ENCODE measurements at regions of chr1 and their contacts with region 1.

Region 1: GRCh38 chr1:112619520-112620376 is at the start of gene CAPZA1:
- DNase-seq: peak; percentile 95
- ATAC-seq: peak; percentile 98
- H3K4me3 ChIP-seq: peak within 1 kb of the TSS; percentile 97
- H3K27ac ChIP-seq: peak within 1 kb of the TSS; percentile 99
- H3K4me1 ChIP-seq: peaks cover 31% of the 10 kb centered on the region
- H3K27me3 ChIP-seq: no peaks in the 10 kb centered on the region
- CTCF ChIP-seq: no peak
- total RNA-seq, gene CAPZA1: 123 TPM

Region 2: DNA sequence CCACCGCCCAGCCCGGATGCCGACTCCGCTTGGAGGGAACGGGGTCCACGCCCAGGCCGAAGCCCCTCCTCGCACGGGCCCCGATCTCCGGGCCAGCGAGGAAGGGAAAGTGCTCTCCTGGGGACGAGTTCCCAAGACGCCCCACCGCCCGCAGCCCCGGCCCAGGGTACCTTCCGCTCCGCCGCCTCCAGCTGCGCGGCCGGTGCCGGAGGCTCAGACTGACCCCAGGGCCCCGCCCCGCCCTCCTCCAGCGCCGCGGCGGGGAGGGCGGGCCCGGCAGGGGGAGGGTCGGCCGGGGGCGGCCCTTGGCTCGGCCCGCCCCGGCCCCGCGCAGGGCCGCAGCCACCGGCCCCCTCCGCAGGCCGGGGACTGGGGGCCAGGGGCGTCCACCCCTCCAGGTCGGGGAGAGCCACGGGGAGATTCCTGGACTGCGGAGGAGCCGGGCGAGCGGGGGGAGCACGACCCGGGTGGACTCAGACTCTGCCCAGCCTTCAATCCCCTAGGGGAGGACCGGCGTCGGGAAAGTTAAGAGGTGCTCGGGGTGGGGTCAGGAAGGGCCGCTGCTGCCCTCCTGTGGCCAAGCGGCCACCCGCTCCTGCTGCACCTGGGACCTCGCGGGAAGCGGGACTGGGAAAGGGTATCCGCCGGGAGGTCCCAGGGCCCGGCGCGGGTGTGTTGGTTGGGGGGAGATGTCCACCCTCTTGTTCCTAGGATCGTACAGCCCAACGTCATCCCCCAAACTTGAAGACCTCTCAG is 87.3 kb after region 1 on chr1 and contains the start of gene RHOC:
- intact Hi-C with region 1: loop called (anchors 10 kb)
- DNase-seq: peak; percentile 93
- ATAC-seq: peak; percentile 89
- H3K4me3 ChIP-seq: peak within 1 kb of the TSS; percentile 97
- H3K27ac ChIP-seq: peak within 1 kb of the TSS; percentile 92
- H3K4me1 ChIP-seq: peaks cover 42% of the 10 kb centered on the region
- H3K27me3 ChIP-seq: no peaks in the 10 kb centered on the region
- CTCF ChIP-seq: peak; percentile 90
- total RNA-seq, gene RHOC: 150 TPM

Measured in upper lobe of right lung (tissue), 1 donor.